Right ventricle myocardium superior (tissue), 1 donor: ENCODE measurements at regions of chr16 and their contacts with region 1.

Region 1: DNA sequence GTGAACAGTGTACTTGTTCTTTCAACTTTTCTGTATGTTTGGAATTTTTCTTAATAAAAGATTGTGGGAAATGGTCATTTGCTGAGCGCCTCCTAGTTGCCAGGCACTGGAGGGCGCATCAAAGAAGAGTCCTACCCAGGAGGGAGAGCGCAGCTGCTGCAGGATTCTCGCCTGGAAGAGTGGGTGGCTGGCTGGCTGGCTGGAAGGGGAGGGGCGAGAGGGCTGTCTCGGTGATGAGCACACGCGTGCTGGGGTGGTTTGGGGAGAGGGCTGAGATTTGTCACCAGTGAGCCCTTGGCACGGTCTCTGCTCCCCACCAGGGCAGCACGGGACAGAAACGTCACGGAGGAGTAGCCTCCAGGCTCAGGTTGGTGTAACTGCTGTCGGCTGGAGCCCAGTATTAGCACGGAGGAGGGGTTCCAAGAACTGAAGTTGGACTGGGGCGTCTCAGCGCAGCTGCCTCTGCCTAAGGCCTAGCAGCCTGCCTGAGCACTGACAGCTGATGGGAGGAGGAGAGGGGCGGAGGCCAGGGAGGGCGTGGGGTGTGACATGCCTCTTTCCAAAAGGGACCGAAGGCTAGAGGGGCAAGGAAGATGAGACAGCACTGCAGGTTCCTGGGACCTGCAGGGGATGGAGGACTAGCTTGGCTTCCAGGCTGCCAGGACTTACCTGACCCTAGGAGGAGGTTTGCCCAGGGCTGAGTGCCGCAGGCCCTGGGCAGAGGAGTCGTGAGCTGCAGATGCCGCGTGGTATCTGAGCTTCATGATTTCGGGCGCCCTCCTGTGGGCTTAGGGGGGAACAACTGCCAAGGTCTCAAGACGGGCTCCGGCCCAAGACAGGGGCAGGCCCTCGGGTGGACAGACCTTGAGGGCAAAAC is 5.7 kb downstream of the LDHD start:
- DNase-seq: peak; percentile 92
- ATAC-seq: peak; percentile 67

Region 2: GRCh38 chr16:74874912-74875546 is 235.8 kb before region 1 on chr16:
- intact Hi-C with region 1: loop called (anchors 10 kb)
- DNase-seq: peak; percentile 56
- ATAC-seq: peak; percentile 88

Region 3: DNA sequence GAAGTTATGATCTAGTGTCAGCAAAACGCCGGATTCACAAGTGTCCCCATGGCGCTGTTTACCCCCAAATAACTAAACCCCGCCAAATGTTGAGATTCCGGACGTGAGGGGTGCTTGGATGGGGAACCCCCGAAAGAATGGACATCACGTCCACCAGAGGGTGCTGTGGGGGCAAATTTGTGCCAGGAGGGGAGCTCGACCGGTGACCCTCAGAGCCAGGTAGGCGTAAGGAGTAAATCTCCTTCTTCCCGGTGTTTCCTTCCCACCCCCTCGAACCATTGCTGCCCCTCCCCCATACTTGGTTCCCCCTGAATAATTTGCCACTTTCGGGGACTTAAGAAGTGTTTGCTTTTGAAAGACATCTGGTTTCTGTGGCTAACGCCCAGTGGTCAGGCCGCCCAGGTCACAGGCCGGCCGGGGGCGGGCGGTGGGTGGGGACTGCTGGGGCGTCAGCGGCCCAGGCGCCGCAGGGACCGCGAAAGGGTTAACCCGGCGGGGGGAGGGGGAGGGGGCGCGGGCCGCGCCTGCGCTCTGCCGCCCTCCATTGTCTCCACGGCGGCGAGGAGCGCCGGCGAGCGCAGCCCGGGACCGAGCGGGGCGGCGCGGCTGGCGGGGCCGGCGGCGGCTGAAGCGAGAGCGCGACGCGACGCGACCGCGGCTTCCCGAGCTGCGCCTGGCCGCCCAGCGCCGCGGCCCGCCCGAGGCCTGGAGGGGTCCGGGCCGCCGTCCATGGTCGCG is 112.2 kb before region 1 on chr16 and contains the start of gene ZNRF1:
- intact Hi-C with region 1: loop called (anchors 2 kb)
- DNase-seq: peak; percentile 90
- ATAC-seq: peak; percentile 88
- total RNA-seq, gene ZNRF1: 22.0 TPM

Region 4: DNA sequence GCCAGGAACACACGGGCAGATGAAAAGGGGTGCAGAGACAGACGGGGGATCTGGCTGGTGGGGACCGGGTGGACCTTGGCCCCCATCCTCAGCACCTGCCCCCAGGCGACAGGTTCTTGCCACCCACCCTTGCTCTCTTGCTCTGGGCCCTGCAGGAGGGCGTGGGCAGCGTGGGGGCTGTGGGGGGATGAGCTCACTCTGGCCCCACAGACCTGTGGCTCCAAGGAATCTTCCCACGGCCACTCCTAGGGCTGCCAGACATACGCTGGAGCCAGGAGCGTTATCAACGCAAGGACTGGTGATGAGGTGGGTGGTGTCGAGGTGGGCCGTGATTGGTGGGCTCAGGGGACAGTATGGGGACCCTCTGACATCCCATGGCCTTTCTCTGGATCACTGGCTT is 114.2 kb after region 1 on chr16:
- intact Hi-C with region 1: no loop called
- DNase-seq: no peak
- ATAC-seq: no peak